ENCODE measurements at regions of chr2 and their contacts with region 1.

Region 1: GRCh38 chr2:88027697-88028389 is 11.5 kb upstream of the RNU2-63P start:
- DNase-seq: no peak
- ATAC-seq: peak; percentile 52
- H3K4me3 Mint-ChIP-seq: peak overlapping the region; percentile 73
- H3K27ac Mint-ChIP-seq: peak overlapping the region; percentile 85
- H3K4me1 Mint-ChIP-seq: peaks cover 21% of the 10 kb centered on the region
- H3K27me3 Mint-ChIP-seq: no peaks in the 10 kb centered on the region
- CTCF ChIP-seq: no peak

Region 2: DNA sequence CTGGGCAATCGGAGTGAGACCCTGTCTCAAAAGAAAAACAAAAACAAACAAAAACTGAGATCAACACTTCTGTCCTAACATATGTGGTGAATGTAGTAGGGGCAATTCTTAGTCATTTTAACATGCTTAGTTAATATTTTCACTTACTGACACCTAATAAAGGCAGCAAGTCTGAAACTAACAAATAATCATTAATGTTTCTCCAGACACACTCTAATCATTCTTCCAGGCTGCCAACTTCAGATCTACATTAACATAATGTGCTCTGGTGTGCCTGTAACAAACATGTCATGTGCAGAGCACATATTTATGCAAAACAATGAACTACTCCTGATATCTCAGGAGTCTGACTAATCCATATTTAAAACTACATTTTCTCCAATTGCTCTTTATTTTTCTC is 21.8 kb after region 1 on chr2:
- CTCF ChIA-PET with region 1: no interaction called
- POLR2A ChIA-PET with region 1: interaction called, 4 read pairs
- intact Hi-C with region 1: loop called (anchors 2 kb)
- DNase-seq: no peak
- ATAC-seq: no peak
- H3K4me3 Mint-ChIP-seq: no peak overlapping the region
- H3K27ac Mint-ChIP-seq: peak overlapping the region; percentile 53
- H3K4me1 Mint-ChIP-seq: peaks cover 39% of the 10 kb centered on the region
- H3K27me3 Mint-ChIP-seq: no peaks in the 10 kb centered on the region
- CTCF ChIP-seq: no peak

Region 3: GRCh38 chr2:88181511-88181910 is 153.7 kb after region 1 on chr2:
- CTCF ChIA-PET with region 1: no interaction called
- POLR2A ChIA-PET with region 1: no interaction called
- intact Hi-C with region 1: no loop called
- DNase-seq: no peak
- ATAC-seq: no peak
- H3K4me3 Mint-ChIP-seq: no peak overlapping the region
- H3K27ac Mint-ChIP-seq: peak overlapping the region; percentile 20
- H3K4me1 Mint-ChIP-seq: peaks cover 20% of the 10 kb centered on the region
- H3K27me3 Mint-ChIP-seq: peaks cover 5% of the 10 kb centered on the region
- CTCF ChIP-seq: no peak